Ovary (tissue), 10 donors: ENCODE measurements at regions of chr16 and their contacts with region 1.

Region 1: DNA sequence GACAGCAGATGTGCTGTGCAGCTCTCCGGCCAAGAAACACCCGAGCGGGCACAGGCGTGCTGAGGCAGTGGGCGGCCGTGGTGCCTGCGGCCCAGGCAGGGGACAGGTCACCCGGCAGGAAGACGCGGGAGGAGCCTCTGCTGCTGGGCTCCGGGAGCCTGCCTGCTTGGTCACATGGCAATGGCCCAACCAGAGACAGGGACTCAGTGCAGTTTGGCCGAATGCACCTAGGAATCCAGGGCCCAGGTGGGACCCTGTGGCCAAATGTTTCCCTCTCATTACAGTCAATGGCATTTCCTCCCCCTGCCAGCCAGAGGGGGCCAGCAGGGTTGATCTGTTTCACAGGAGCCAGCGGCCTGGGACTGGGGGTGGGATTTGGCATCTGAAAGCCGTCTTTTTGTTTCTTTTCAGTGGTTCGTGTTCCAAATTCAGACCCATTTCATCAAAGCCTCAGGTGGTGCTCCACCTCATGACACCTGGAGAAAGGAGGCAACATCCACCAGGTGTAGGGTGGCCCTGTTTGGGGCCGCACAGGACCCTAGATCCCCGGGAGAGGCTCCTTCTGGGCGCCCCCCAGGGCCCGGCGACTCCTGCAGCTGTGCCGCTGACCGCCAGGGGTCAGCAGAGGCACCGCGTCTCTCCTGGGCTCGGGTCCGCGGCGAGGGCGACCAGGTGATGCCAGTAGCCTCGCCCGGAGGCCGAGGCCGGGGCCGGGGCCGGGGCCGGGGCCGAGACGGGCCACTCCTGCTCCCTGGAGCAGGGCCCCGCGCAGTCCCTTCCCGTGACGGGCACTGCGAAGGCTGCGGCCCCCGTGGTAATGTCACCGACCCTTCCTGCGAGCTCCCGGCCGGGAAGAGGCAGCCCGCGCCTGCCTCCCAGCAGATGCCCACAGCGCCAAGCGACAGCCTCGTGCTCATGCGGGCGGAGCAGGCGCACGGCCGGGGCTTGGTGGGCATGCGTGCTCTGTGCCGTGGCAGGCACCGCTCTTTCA is 118.5 kb downstream of the C16orf78 start:
- DNase-seq: peak; percentile 61 to 79 (median 74)
- H3K4me3 ChIP-seq: peak overlapping the region; percentile 37
- H3K27ac ChIP-seq: peak overlapping the region in 1 of 2 donors; percentile 24
- H3K4me1 ChIP-seq: peaks cover 3% of the 10 kb centered on the region
- H3K27me3 ChIP-seq: no peaks in the 10 kb centered on the region
- CTCF ChIP-seq: peak; percentile 89 to 94 (median 93)
- EP300 ChIP-seq: no peak
- POLR2A ChIP-seq: peak; percentile 20

Region 2: GRCh38 chr16:49407873-49408550 is 84.1 kb before region 1 on chr16:
- intact Hi-C with region 1: loop called in 1 of 4 experiments (anchors 5 kb)
- DNase-seq: peak; percentile 85 to 92 (median 86)
- H3K4me3 ChIP-seq: no peak overlapping the region
- H3K27ac ChIP-seq: no peak overlapping the region
- H3K4me1 ChIP-seq: no peaks in the 10 kb centered on the region
- H3K27me3 ChIP-seq: no peaks in the 10 kb centered on the region
- CTCF ChIP-seq: peak; percentile 74 to 85 (median 85)
- EP300 ChIP-seq: no peak
- POLR2A ChIP-seq: no peak

Region 3: DNA sequence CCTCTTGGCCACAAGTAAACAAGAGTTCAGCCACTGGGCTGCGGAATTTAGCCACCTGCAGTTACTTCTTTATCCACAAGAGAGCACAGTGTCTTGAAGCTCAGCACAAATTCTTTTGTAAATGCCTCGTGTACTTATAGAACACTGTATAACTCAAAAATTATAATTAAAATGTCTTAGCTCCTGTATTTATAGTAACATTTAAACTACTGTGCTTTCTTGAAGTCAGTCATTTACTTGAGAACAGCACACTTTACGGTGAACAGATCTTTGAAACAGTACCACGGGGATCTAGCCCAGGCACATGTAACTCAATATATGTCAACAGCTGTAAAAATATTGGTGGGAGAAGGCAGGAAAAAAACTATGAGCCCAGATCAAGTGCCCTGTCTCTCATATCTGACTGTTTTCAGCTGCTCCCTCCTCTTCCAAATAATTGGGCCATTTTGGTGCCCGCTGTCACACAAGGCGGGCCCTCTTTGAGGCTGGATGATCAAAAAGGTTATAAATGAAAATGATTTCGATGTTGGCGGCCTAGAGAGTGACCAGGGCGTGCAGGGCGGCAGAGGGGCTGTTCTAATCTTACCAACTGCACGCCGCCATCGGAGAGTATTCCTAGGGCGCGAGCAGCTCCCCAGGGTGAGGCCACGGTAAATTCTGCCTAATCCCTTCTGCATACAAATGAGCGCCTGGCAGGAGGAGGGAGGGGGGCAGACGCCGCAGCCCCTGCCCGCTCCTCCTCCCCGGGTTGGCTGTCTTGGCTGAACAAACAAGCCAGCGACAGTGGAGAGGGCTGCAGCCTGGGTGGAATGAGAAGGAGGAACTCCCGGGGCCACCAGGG is 64.8 kb after region 1 on chr16:
- intact Hi-C with region 1: loop called in 1 of 4 experiments (anchors 5 kb)
- DNase-seq: no peak
- H3K4me3 ChIP-seq: no peak overlapping the region
- H3K27ac ChIP-seq: no peak overlapping the region
- H3K4me1 ChIP-seq: no peaks in the 10 kb centered on the region
- H3K27me3 ChIP-seq: no peaks in the 10 kb centered on the region
- CTCF ChIP-seq: peak in 2 of 3 donors; percentile 26 to 53
- EP300 ChIP-seq: no peak
- POLR2A ChIP-seq: no peak

Region 4: GRCh38 chr16:49608779-49609178 is 116.7 kb after region 1 on chr16:
- intact Hi-C with region 1: no loop called
- DNase-seq: peak in 2 of 5 donors; percentile 22 to 40
- H3K4me3 ChIP-seq: no peak overlapping the region
- H3K27ac ChIP-seq: no peak overlapping the region
- H3K4me1 ChIP-seq: no peaks in the 10 kb centered on the region
- H3K27me3 ChIP-seq: no peaks in the 10 kb centered on the region
- CTCF ChIP-seq: peak in 1 of 3 donors; percentile 27
- EP300 ChIP-seq: no peak
- POLR2A ChIP-seq: no peak

Region 5: GRCh38 chr16:49755313-49755620 is 263.2 kb after region 1 on chr16:
- intact Hi-C with region 1: loop called in 3 of 4 experiments (anchors 5 to 10 kb)
- DNase-seq: peak in 1 of 5 donors; percentile 48
- H3K4me3 ChIP-seq: peak overlapping the region; percentile 41
- H3K27ac ChIP-seq: no peak overlapping the region
- H3K4me1 ChIP-seq: no peaks in the 10 kb centered on the region
- H3K27me3 ChIP-seq: no peaks in the 10 kb centered on the region
- CTCF ChIP-seq: peak; percentile 37 to 45 (median 41)
- EP300 ChIP-seq: no peak
- POLR2A ChIP-seq: no peak

Region 6: DNA sequence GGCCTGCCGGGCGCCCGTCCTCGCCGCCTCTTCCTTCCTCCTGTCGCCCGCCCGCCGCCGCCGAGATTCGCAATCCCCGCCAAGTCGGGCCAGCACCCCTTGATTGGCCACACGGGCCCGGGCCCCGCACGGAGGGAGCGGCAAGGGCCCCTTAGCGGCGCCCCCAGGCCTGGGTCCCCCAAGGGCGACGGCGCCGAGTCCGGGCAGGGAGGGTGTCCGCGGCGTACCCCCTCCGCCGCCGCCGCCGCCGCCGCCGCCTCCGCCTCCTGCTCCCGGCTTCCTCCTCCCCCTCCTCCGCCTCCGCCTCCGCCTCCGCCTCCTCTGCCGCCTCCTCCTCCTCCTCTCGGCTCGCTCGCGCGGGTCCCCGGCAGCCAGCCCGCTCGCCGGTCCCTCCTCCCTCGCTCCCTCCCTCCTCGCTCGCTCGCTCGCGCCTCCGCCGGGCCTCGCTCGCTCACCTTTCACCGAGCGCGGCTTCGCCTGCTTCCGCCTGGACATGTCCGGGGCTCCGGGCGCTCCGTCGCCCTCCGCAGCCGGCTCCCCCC is 363.3 kb after region 1 on chr16:
- intact Hi-C with region 1: loop called in 1 of 4 experiments (anchors 5 kb)
- DNase-seq: peak; percentile 89 to 92 (median 90)
- H3K4me3 ChIP-seq: peak overlapping the region; percentile 85
- H3K27ac ChIP-seq: peak overlapping the region; percentile 69 to 95
- H3K4me1 ChIP-seq: peaks cover 4% of the 10 kb centered on the region
- H3K27me3 ChIP-seq: no peaks in the 10 kb centered on the region
- CTCF ChIP-seq: no peak
- EP300 ChIP-seq: no peak
- POLR2A ChIP-seq: peak; percentile 76

Region 7: GRCh38 chr16:49876716-49877129 is 384.7 kb after region 1 on chr16:
- intact Hi-C with region 1: loop called in 1 of 4 experiments (anchors 10 kb)
- DNase-seq: peak; percentile 60 to 83 (median 72)
- H3K4me3 ChIP-seq: peak overlapping the region; percentile 8
- H3K27ac ChIP-seq: peak overlapping the region in 1 of 2 donors; percentile 12
- H3K4me1 ChIP-seq: no peaks in the 10 kb centered on the region
- H3K27me3 ChIP-seq: no peaks in the 10 kb centered on the region
- CTCF ChIP-seq: peak; percentile 50 to 70 (median 63)
- EP300 ChIP-seq: no peak
- POLR2A ChIP-seq: no peak